RWPE1 (cell line): ENCODE measurements at regions of chr10 and their contacts with region 1.

Region 1: GRCh38 chr10:118373786-118374185 is 31.7 kb upstream of the FAM204A start:
- DNase-seq: peak; percentile 66
- H3K27ac ChIP-seq: no peak overlapping the region
- CTCF ChIP-seq: no peak

Region 2: DNA sequence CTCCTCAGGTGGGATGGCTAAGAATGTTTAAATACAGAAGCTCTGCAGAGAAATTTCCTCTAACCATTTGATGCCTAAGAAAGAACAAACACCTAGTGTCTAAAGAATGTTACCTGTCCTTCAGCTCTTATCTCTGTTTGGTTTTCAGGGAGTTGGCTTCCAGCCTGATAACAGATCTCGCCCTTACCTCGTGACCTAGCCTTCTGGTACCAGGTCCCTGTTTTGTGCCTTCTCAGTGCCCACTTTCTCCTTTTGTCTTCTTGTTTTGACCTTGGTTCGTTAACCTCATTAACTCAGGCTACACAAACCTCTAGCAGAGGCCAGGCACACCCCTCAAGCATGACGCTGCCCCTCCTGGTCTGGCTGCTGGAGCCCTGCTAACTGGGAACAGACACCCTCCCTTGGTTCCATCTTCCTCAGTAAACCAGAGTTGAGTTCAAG is 311.0 kb before region 1 on chr10:
- CTCF ChIA-PET with region 1: no interaction called
- POLR2A ChIA-PET with region 1: no interaction called
- DNase-seq: no peak
- H3K27ac ChIP-seq: no peak overlapping the region
- CTCF ChIP-seq: no peak

Region 3: DNA sequence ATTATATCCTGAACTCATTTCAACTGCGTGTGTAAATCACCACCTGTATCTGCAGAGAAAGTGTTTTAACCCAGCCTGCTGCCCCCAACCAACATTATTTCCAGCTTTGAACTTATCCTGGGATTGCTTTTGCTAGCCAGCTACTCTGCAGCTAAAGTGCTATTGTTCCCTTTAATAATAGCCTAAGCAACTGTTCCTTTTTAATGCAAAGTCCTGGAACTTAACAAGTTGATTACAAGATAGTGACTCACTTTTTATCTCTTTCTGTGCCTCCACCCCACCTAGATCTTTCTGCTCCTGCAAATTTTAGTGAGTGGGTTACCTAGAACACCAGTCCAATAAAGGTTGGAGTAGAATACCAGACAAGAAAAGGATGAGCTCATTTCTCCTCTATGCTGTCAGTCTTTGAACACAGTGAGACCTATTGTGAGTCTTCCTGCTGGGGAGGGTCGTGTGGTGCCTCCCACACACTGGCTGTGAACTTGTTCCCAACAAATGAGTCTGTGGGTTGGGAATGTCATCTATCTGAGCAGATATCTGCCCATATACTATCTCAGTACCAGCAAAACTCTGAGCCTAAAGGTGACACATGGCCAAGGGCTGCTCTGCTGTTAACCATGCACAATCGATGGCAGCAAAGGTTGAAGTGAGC is 169.4 kb before region 1 on chr10:
- CTCF ChIA-PET with region 1: no interaction called
- POLR2A ChIA-PET with region 1: no interaction called
- DNase-seq: no peak
- H3K27ac ChIP-seq: no peak overlapping the region
- CTCF ChIP-seq: no peak

Region 4: GRCh38 chr10:118358327-118358726 is 15.5 kb before region 1 on chr10:
- CTCF ChIA-PET with region 1: no interaction called
- POLR2A ChIA-PET with region 1: no interaction called
- DNase-seq: no peak
- H3K27ac ChIP-seq: no peak overlapping the region
- CTCF ChIP-seq: no peak

Region 5: DNA sequence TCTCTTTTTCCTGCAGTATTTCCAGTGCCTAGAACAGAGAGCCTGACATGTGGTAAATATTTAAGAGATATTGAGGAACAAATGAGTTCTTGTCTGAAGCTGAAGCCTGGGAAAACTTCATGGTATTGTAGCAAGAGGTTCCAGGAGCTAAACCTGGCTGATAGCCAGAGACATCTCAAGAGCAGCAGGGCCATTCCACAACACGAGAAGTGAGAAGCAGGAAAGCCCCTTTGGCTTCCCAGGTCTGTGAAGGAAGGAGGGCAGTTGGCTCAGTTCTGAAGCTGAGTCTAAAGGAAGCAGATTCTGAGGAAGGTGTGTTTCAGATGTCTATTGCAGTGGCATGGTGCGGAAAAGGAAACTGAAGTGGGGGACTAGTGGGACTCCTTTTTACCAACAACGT is 32.1 kb after region 1 on chr10:
- CTCF ChIA-PET with region 1: interaction called, 10 read pairs
- POLR2A ChIA-PET with region 1: no interaction called
- DNase-seq: no peak
- H3K27ac ChIP-seq: no peak overlapping the region
- CTCF ChIP-seq: no peak

Region 6: DNA sequence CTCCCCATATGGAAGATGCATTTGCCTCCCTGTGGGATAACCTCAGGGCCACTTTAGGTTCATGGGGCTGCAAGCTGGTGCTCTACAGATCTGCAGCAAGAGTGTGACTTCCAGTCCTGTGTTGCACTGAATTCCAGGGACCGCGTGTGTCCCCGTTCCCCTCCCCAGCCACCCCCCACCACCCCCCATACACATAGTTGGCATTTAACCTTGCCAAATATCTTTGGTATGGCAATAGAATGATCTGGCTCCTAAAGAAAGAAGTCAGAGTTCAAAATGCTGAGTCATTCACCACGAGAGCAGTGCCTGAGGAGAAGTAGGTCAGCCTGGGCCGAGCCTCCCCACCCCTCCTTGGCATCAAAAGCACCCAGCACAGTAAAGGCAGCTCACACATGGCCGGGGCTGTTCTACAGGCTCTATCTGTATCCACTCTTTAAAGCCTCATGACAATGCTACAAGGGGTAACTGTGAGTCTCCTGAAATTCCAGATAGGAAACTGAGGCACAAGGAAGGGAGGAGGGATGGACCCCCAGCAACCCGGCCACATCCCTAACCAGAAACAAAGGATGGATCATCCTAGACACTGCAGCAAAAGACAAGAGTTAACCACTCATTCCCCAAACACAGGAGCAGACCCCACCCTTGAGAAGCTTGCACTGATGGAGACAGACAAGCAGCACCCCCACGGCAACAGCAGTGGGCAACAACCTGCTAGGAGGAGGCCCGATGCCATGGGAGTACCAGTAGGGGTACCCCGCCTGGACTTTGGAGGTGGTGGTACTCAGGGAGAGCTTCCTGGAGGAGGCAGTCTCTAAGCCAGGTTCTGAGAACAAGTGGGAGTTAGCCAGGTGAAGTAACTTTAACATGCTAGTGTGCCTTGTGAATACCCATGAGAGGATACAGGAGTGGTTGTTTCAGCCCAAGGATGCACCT is 585.5 kb after region 1 on chr10:
- CTCF ChIA-PET with region 1: no interaction called
- POLR2A ChIA-PET with region 1: no interaction called
- DNase-seq: peak; percentile 93
- H3K27ac ChIP-seq: peak overlapping the region; percentile 65
- CTCF ChIP-seq: no peak